ENCODE measurements at regions of chr1 and their contacts with region 1.

Region 1: GRCh38 chr1:113072757-113073478 is at the start of gene LRIG2:
- DNase-seq: peak; percentile 94
- H3K4me3 ChIP-seq: peak within 1 kb of the TSS; percentile 90 to 96
- H3K27ac ChIP-seq: peak within 1 kb of the TSS; percentile 87 to 97
- H3K4me1 ChIP-seq: peaks cover 6 to 7% of the 10 kb centered on the region in 2 experiments; a peak in 3 of 4 replicates
- H3K27me3 ChIP-seq: no peaks in the 10 kb centered on the region
- CTCF ChIP-seq: peak; percentile 99
- EP300 ChIP-seq: no peak; a peak in 1 of 4 replicates
- RAD21 ChIP-seq: peak; percentile 50
- polyA plus RNA-seq, gene LRIG2: 3.8 and 4.9 TPM in 2 replicates

Region 2: DNA sequence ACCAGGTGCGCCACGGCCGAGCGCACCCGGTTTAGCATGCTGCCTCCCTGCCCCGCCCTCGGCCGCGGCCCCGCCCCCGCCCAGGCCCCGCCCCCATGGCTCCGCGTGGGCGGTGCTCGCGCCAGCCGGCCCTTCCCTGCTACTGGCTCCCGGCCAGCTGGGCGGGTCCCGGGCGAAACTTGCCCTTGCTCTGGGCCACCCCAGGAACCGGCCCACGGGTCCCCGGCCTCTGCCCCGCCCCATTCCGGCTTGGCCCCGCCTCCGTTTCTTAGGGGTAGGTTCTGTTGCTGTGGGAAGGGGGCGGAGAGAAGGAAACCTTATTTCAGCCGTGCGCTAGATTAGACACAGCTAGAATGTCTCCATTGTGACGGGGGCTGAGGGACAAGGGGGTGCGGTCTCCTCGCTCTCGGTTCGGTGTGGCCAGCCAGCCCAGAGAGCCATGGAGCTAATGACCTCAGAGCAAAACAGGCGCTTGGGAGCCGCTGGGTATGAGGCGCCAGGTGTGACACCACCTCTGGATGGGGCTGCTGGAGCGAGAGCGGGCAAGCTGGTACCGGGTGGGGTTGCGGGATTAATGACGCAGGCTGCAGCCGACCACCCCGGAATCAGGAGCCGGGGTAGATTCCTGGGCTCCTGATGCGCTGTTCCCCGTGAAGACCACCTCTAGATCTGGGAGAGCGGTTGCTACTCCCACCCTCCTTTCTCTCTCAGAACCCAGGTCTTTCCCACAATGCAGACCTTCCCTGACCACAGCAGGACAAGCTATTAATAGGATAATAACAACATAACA is 357.5 kb before region 1 on chr1 and contains the start of gene PPM1J:
- CTCF ChIA-PET with region 1: interaction called, 36 read pairs
- POLR2A ChIA-PET with region 1: interaction called, 4 read pairs
- DNase-seq: peak; percentile 96
- H3K4me3 ChIP-seq: peak within 1 kb of the TSS; percentile 72 to 83
- H3K27ac ChIP-seq: peak within 1 kb of the TSS in 1 of 2 experiments; percentile 29; a peak in 2 of 4 replicates
- H3K4me1 ChIP-seq: peaks cover 0 to 23% of the 10 kb centered on the region in 2 experiments; a peak in 1 of 4 replicates
- H3K27me3 ChIP-seq: no peaks in the 10 kb centered on the region
- CTCF ChIP-seq: no peak
- EP300 ChIP-seq: no peak
- RAD21 ChIP-seq: no peak
- polyA plus RNA-seq, gene PPM1J: 5.3 and 6.7 TPM in 2 replicates

Region 3: DNA sequence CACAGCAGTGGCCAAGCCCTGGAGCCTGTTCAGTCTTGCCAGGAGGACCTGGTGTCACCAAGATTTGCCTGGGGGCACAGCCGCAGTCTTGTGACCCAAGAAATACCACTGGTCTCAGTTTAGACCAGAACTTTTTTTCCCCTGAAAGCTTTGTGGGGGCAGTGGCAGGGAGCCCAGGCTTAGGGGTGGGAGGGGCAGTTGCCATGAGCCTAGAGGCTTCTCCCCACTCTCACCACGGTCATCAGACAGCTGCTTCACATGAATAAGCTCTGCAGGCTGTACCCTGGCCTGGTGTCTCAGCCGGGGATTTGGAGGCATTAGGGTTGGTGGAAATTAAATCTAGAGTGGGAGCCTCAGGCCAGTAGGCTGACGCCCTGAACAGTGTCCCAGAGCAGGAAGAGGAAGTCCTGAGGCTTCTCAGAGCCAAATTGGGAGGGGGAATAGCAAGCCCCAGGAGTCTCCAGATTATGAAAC is 190.6 kb before region 1 on chr1:
- CTCF ChIA-PET with region 1: interaction called, 49 read pairs
- POLR2A ChIA-PET with region 1: interaction called, 6 read pairs
- DNase-seq: peak; percentile 23
- H3K4me3 ChIP-seq: no peak overlapping the region
- H3K27ac ChIP-seq: no peak overlapping the region
- H3K4me1 ChIP-seq: peaks cover 0 to 9% of the 10 kb centered on the region in 2 experiments; a peak in 1 of 4 replicates
- H3K27me3 ChIP-seq: no peaks in the 10 kb centered on the region
- CTCF ChIP-seq: no peak
- EP300 ChIP-seq: no peak
- RAD21 ChIP-seq: no peak

Region 4: GRCh38 chr1:112985123-112985522 is 87.8 kb before region 1 on chr1:
- CTCF ChIA-PET with region 1: no interaction called
- POLR2A ChIA-PET with region 1: no interaction called
- DNase-seq: no peak
- H3K4me3 ChIP-seq: no peak overlapping the region
- H3K27ac ChIP-seq: no peak overlapping the region
- H3K4me1 ChIP-seq: no peaks in the 10 kb centered on the region
- H3K27me3 ChIP-seq: no peaks in the 10 kb centered on the region
- CTCF ChIP-seq: no peak
- EP300 ChIP-seq: no peak
- RAD21 ChIP-seq: no peak

Region 5: GRCh38 chr1:113042285-113043143 is 30.4 kb before region 1 on chr1:
- CTCF ChIA-PET with region 1: interaction called, 31 read pairs
- POLR2A ChIA-PET with region 1: interaction called, 4 read pairs
- DNase-seq: peak; percentile 79
- H3K4me3 ChIP-seq: peak overlapping the region in 1 of 2 experiments; percentile 21; a peak in 1 of 4 replicates
- H3K27ac ChIP-seq: peak overlapping the region; percentile 48 to 70
- H3K4me1 ChIP-seq: peaks cover 7 to 18% of the 10 kb centered on the region in 2 experiments; a peak in 3 of 4 replicates
- H3K27me3 ChIP-seq: no peaks in the 10 kb centered on the region
- CTCF ChIP-seq: peak; percentile 70
- EP300 ChIP-seq: no peak
- RAD21 ChIP-seq: peak; percentile 96

Region 6: GRCh38 chr1:113088972-113089371 is 16.1 kb after region 1 on chr1:
- CTCF ChIA-PET with region 1: interaction called, 27 read pairs
- POLR2A ChIA-PET with region 1: no interaction called
- DNase-seq: peak; percentile 34
- H3K4me3 ChIP-seq: no peak overlapping the region
- H3K27ac ChIP-seq: peak overlapping the region in 1 of 2 experiments; percentile 64; a peak in 1 of 4 replicates
- H3K4me1 ChIP-seq: peaks cover 3 to 6% of the 10 kb centered on the region in 2 experiments; a peak in 2 of 4 replicates
- H3K27me3 ChIP-seq: no peaks in the 10 kb centered on the region
- CTCF ChIP-seq: no peak
- EP300 ChIP-seq: peak in 1 of 2 experiments; percentile 17; a peak in 1 of 4 replicates
- RAD21 ChIP-seq: no peak

Region 7: DNA sequence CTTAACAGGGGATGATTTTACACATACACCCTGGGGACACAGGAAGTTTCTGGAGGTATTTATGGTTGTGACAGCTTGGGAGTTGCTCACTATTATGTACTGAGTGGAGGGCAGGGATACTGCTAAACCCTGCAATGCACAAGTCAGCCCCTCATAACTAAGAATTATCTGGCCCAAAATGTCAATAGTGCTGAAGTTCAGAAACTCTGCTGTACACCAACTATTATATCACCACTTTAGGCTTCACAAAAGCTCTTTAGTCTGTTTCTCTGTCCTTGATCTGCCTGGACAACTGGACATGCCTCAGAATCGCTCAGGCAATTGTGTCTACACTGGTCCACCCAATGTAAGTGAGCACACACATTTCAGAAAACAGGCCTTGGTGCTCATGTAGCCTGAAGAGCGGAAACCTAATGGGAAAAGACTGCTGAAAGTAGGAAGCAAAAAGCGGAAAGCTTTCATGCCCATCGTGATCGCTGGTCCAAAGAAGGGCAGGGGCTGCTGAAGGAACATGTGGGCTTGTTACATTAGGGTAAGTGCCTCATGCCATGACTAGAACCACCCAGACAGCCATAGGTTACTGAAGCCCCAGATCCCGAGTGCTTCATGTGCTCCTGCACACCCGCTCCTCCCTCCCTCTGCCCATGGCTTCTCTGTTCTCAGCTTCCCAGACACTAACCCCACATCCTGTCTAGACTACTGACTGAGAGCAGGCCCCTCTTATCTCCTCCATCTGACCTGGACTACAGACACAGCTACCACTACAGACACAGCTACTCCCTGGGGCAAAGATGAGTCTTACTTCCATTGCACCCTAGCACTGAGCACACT is 73.5 kb after region 1 on chr1:
- CTCF ChIA-PET with region 1: interaction called, 12 read pairs
- POLR2A ChIA-PET with region 1: interaction called, 4 read pairs
- DNase-seq: peak; percentile 78
- H3K4me3 ChIP-seq: no peak overlapping the region
- H3K27ac ChIP-seq: peak overlapping the region; percentile 36 to 100
- H3K4me1 ChIP-seq: peaks cover 20 to 51% of the 10 kb centered on the region in 2 experiments
- H3K27me3 ChIP-seq: no peaks in the 10 kb centered on the region
- CTCF ChIP-seq: no peak
- EP300 ChIP-seq: peak; percentile 58 to 96; a peak in 3 of 4 replicates
- RAD21 ChIP-seq: peak; percentile 47

Measured in SK-N-SH (cell line).